ENCODE measurements at regions of chr11 and their contacts with region 1.

Region 1: DNA sequence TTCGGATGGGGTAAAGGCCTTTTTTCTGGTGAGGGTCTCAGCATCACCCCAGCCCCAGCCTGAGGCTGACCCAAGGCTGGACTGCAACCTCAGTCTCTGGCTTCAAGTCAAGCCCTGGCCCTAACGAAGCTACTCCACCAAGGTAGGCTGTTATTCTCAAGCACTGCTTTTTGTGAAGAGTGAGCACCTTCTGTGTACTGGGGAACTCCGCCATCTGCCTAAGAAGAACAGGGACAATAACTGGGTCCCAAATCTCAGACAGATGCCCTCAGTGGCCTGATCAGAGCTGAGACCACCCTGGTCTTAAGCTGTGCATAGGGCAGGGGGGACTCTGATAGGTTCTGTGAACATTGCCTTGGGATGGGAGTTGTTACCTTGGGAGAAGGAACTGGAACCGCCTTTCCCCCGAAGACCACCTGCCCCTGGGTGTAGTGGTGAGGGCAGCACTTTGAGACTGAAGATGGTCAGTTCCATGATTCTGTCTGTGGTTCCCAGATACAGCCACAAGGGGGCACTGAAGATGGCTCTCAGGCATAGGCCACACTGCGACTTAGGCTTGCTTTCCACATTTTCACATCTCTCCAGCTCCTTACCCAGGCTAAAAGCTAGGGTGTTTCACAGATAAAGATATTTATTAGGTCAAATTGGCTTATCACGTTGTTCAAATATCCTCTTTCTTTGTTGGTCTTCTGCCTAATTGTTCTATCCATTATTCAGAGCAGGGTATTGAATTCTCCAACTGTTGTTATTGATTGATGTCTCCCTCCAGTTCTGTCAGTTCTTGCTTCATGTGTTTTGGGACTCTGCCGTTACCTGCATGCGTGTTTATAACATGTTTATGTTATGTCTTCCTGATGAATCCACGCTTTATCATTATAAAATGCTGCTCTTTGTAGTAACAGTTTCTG is 11.8 kb upstream of the UVRAG start:
- DNase-seq: no peak
- H3K4me3 ChIP-seq: no peak overlapping the region
- CTCF ChIP-seq: peak; percentile 93

Region 2: DNA sequence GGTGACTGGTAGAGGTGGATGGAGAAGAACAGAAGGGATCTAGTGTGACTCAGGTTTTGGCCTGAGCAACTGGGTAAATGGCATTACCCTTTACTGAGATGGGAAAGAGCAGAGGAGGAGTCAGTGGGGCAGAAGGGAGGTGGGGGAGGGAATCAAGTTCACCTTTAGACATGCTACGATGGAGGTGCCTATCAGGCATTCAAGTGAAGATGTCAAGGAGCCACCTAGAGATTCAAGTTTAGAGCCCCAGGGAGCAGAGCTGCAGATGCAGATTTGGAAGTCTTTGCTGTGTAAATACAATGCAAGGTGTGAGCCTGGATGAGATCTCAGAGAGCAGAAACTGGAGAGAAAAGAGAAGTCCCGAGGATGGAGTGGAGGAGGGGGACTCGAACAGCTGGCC is 86.5 kb before region 1 on chr11:
- CTCF ChIA-PET with region 1: no interaction called
- POLR2A ChIA-PET with region 1: no interaction called
- DNase-seq: no peak
- H3K4me3 ChIP-seq: no peak overlapping the region
- CTCF ChIP-seq: no peak

Region 3: DNA sequence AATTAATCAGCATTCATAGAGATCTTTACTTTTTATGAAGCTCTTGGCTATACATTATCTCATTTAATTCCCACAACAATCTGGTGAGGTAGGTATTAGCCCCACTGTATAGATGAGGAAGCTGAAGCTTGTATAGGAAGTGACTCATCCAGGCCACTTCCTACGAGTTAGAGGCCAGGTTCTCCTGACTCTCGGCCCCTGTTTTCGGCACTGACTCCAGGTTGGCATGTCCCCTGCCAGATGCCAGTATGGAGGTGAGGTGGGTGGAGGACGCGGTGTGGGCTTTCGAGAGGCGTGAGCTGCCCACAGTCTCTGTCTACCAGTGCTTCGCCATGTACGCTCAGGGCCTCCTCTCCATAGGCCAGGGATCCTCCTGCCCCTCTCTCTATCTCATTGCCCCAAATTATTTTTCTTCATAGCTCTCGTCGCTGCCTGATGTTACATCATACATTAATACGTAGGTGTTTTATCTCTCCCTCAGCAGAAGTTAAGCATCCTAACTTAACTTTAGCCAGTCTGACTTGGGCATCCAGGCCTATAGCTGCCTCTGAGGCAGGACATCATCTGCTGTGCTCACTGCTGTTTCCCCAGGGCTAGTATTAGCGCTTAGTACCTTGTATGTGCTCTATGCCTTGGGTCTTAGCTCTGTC is 25.6 kb before region 1 on chr11:
- CTCF ChIA-PET with region 1: interaction called, 15 read pairs
- POLR2A ChIA-PET with region 1: no interaction called
- DNase-seq: no peak
- H3K4me3 ChIP-seq: no peak overlapping the region
- CTCF ChIP-seq: no peak

Region 4: DNA sequence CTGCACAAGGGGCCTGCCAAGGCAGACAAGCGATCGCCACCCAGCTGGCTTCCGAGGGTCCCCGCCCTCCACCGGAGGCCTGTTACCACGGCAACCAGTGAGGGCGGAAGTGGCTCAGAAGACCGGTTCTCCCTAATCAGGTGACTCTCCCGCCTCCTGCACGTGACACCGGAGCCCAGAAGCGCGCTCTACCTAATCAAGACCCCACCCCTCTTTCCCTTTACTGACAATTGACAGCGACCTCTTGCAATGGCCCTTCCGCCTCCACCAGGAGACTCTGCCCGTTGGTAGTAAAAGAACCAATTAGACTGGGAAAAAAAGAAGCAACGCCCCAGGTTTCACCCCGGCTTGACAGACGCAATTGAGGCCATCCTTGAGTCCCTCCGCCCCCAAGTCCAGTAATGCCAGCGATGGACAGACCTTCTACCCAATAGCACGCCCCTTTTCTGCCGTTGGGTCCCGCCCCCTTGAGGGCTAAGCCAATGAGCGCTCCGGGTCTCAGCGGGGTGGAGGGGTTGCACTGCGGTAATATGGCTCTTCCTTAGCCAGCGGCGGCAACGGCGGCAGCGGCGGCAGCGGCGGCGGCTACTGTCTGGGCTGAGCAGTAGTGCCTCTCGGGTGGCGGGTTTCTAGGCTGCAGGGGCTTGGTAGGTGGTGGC is 11.6 kb after region 1 on chr11 and contains the start of gene UVRAG:
- CTCF ChIA-PET with region 1: interaction called, 68 read pairs
- POLR2A ChIA-PET with region 1: no interaction called
- DNase-seq: peak; percentile 98
- H3K4me3 ChIP-seq: peak within 1 kb of the TSS; percentile 79
- CTCF ChIP-seq: no peak

Region 5: DNA sequence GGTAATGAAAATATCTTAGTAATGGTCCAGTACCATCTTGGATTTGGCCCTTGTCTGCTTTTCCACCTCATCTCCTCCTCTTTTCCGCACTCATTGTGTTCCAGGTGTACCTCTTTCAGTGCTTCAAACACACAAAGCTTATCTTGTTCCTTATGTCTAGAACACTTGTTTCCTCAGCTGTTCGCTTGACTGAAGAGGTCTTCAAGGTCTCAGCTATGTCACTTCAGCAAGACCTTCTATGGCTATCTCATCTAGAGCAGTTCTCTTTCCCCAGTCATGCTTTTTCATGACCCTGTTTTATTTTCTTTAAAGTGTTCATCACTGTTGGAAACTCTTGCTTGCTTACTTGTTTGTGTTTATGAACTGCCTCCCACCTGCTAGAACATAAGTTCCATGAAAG is 59.3 kb after region 1 on chr11:
- CTCF ChIA-PET with region 1: interaction called, 181 read pairs
- POLR2A ChIA-PET with region 1: no interaction called
- DNase-seq: no peak
- H3K4me3 ChIP-seq: no peak overlapping the region
- CTCF ChIP-seq: no peak

Region 6: DNA sequence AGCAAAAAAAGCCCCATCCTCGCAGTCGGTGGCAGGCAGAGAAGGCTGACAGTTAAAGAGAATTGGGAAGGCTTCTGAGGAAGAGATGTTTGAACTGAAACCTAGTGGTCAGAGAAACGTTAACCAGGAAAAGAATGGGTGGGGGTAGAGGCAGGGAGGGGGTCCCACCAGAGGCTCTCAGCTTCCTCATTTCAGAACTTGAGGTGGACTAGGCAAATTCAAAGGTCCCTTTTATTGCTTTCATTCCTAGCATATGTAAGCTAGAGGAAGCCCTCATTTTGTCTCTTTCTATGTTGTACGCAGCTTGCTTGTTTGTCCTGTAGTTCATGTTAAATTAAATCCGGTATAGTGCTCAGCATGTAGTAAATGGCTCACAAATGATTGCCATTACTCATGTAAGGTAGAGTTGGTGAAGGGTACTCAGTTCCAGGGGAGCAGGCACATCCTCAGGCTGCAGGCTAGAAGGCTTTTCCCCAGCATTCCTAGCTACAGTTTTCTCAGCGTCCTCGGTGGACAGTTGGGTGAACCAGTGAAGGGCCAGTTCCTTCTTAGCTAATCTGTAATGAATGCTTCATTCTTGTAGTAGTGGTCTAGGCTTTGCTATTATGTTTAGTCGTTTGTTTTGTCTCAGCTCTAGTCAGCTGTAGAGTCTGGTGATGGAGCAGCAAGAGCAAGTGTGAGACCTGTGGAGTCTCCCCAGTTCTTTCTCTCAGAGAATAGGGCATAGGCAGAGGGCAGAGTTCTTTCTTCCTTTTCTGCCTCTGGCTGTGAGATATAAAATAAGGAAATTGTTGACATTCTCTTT is 70.5 kb after region 1 on chr11:
- CTCF ChIA-PET with region 1: interaction called, 181 read pairs
- POLR2A ChIA-PET with region 1: no interaction called
- DNase-seq: no peak
- H3K4me3 ChIP-seq: no peak overlapping the region
- CTCF ChIP-seq: no peak